IMR-90 (cell line): ENCODE measurements at regions of chr1 and their contacts with region 1.

Region 1: DNA sequence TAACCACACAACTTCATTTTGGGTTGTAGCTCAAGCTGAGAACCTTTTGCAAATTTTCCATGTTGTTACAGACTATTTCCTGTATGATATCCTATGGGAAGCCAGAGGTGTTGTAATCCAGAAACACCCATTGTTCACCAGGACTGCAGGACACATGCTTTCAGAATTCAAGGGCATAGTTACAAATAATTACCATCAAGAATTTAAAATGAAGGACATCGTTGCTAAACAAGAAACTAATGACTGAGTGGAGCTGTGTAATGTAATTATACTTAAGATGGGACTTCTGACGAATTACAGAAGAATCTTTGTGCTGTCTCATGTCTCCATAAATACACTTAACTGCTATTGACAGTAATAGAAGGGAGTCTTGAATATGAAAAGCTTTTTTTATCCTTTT is 47.6 kb upstream of the HOOK1 start:
- DNase-seq: no peak
- ATAC-seq: no peak
- H3K4me3 ChIP-seq: no peak overlapping the region
- H3K27ac ChIP-seq: no peak overlapping the region
- H3K4me1 ChIP-seq: 0 out of 2 replicates have a peak, but pooled peaks cover 2% of the 10 kb centered on the region
- H3K27me3 ChIP-seq: no peaks in the 10 kb centered on the region
- CTCF ChIP-seq: no peak
- POLR2A ChIP-seq: no peak
- RAD21 ChIP-seq: no peak

Region 2: GRCh38 chr1:58515794-58516401 is 1251.2 kb before region 1 on chr1:
- CTCF ChIA-PET with region 1: no interaction called
- POLR2A ChIA-PET with region 1: no interaction called
- dilution Hi-C with region 1: no loop called
- in situ Hi-C with region 1: loop called (anchors 25 kb)
- intact Hi-C with region 1: loop called (anchors 10 kb)
- DNase-seq: peak; percentile 85
- ATAC-seq: peak; percentile 79
- H3K4me3 ChIP-seq: no peak overlapping the region
- H3K27ac ChIP-seq: no peak overlapping the region
- H3K4me1 ChIP-seq: no peaks in the 10 kb centered on the region
- H3K27me3 ChIP-seq: no peaks in the 10 kb centered on the region
- CTCF ChIP-seq: peak; percentile 85
- POLR2A ChIP-seq: no peak
- RAD21 ChIP-seq: peak; percentile 86

Region 3: DNA sequence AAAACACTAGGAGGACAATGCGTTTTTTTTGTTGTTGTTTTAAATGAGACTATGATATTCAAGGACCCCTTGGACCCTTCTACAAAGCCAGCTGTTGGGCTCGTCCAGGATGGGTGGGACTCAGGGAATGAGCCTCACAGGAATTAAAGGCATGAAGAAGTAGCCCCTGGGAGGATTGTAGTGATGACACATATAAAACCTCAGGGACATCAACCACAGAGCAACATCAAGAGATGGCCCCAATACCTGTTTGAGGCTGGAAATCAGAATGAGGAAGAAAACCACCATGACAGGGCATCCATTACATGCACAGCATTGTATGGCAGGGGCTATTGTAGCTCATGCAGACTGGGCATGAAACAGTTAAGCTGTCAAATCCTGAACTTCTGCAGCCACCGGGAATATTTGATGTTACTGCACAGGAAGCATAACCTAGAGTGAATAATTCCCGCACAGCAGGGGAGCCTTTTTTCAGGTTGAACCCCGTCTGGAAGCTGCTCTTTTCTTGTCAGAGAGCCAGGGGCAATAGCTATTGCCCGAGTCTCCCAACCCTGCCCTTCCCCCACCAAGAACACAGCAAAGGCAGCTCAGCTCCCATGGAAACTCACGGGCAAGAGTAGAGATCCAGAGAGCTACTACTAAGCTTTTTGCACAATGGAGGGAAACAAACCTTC is 610.5 kb before region 1 on chr1:
- CTCF ChIA-PET with region 1: no interaction called
- POLR2A ChIA-PET with region 1: interaction called, 12 read pairs
- dilution Hi-C with region 1: no loop called
- in situ Hi-C with region 1: no loop called
- intact Hi-C with region 1: no loop called
- DNase-seq: no peak
- ATAC-seq: no peak
- H3K4me3 ChIP-seq: no peak overlapping the region
- H3K27ac ChIP-seq: no peak overlapping the region
- H3K4me1 ChIP-seq: peaks cover 13% of the 10 kb centered on the region
- H3K27me3 ChIP-seq: no peaks in the 10 kb centered on the region
- CTCF ChIP-seq: no peak
- POLR2A ChIP-seq: no peak
- RAD21 ChIP-seq: no peak